Prostate gland (tissue), 2 donors: ENCODE measurements at regions of chrX and their contacts with region 1.

Region 1: GRCh38 chrX:45322382-45322781 is 121.7 kb upstream of the DIPK2B start:
- DNase-seq: peak; percentile 41
- H3K4me3 ChIP-seq: no peak overlapping the region
- H3K27ac ChIP-seq: no peak overlapping the region
- H3K4me1 ChIP-seq: no peaks in the 10 kb centered on the region
- H3K27me3 ChIP-seq: no peaks in the 10 kb centered on the region
- CTCF ChIP-seq: peak in 2 of 4 experiments; percentile 37 to 49
- POLR2A ChIP-seq: no peak

Region 2: GRCh38 chrX:45571453-45571852 is 249.1 kb after region 1 on chrX:
- intact Hi-C with region 1: no loop called
- DNase-seq: no peak
- H3K4me3 ChIP-seq: no peak overlapping the region
- H3K27ac ChIP-seq: no peak overlapping the region
- H3K4me1 ChIP-seq: no peaks in the 10 kb centered on the region
- H3K27me3 ChIP-seq: no peaks in the 10 kb centered on the region
- CTCF ChIP-seq: no peak
- POLR2A ChIP-seq: no peak

Region 3: GRCh38 chrX:46376246-46376885 is 1054.0 kb after region 1 on chrX:
- intact Hi-C with region 1: loop called (anchors 10 kb)
- DNase-seq: peak; percentile 20
- H3K4me3 ChIP-seq: no peak overlapping the region
- H3K27ac ChIP-seq: no peak overlapping the region
- H3K4me1 ChIP-seq: no peaks in the 10 kb centered on the region
- H3K27me3 ChIP-seq: no peaks in the 10 kb centered on the region
- CTCF ChIP-seq: peak in 3 of 4 experiments; percentile 17 to 55 (median 35)
- POLR2A ChIP-seq: no peak

Region 4: GRCh38 chrX:46408553-46409407 is 1086.4 kb after region 1 on chrX:
- intact Hi-C with region 1: loop called (anchors 10 kb)
- DNase-seq: peak; percentile 46
- H3K4me3 ChIP-seq: no peak overlapping the region
- H3K27ac ChIP-seq: no peak overlapping the region
- H3K4me1 ChIP-seq: no peaks in the 10 kb centered on the region
- H3K27me3 ChIP-seq: no peaks in the 10 kb centered on the region
- CTCF ChIP-seq: peak in 3 of 4 experiments; percentile 64 to 65 (median 65)
- POLR2A ChIP-seq: no peak